ENCODE measurements at regions of chr18 and their contacts with region 1.

Region 1: DNA sequence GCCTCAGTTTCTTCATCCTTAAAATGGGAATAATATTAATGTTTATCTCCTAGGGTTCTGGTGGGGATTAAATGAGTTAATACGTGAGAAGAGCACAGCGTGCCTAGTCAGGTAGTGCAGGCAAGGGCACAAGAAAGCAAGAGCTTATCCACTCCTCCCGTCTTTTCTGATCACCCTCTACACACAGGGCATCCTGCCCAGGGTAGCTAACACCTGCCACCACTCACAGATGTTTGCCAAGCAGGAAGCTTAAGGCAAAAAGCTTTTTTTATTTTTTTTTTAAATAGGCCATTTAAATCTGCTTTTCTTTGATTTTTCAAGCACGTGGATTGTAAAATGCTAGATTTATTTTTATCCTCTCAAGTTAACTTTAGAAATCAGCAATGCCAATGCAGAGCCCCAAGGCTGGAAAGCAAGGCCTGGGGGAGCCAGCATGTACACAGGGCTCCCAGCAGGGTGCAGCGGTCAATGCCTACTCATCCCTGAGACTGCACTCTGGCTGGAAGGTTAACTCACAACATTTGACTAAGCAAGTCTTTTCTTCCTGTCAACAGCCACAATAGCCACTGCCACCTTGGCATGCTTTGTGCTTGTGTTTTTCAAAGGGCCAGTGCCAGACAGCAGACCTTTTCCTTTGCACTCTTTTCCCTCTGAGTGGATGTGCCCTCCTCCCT is 86.5 kb upstream of the ACAA2 start:
- DNase-seq: no peak
- H3K4me3 ChIP-seq: no peak overlapping the region
- H3K27ac ChIP-seq: no peak overlapping the region
- H3K4me1 ChIP-seq: no peaks in the 10 kb centered on the region
- H3K27me3 ChIP-seq: no peaks in the 10 kb centered on the region
- CTCF ChIP-seq: 0 out of 2 replicates have a peak, but pooled peaks have one; percentile 31

Region 2: GRCh38 chr18:49967171-49967570 is 67.4 kb after region 1 on chr18:
- CTCF ChIA-PET with region 1: no interaction called
- POLR2A ChIA-PET with region 1: no interaction called
- intact Hi-C with region 1: loop called (anchors 10 kb)
- DNase-seq: no peak
- H3K4me3 ChIP-seq: no peak overlapping the region
- H3K27ac ChIP-seq: no peak overlapping the region
- H3K4me1 ChIP-seq: no peaks in the 10 kb centered on the region
- H3K27me3 ChIP-seq: no peaks in the 10 kb centered on the region
- CTCF ChIP-seq: no peak

Region 3: DNA sequence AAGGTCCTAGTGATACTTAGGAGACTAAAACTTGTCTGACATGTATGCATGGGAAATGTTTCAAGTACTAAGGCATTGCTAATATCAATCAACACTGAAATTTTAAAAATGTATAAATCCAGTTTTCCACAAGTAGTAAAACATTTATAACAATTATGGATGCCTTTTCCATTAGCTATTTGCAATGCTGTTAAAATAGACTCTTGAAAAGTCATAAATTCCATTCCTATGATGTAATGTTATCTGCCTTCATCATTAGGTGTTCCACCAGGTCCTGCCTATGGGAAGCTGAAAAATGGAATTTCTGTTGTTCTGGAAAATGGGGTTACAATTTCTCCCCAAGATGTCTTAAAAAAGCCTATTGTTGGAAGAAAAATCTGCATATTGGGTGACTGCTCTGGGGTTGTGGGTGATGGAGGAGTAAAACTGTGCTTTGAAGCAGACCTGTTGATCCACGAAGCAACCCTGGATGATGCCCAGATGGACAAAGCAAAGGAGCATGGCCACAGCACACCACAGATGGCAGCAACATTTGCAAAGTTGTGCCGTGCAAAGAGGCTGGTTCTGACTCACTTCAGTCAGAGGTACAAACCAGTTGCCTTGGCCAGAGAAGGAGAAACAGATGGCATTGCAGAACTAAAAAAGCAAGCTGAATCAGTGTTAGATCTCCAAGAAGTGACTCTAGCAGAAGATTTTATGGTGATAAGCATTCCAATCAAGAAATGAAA is 1086.7 kb after region 1 on chr18:
- CTCF ChIA-PET with region 1: no interaction called
- POLR2A ChIA-PET with region 1: no interaction called
- intact Hi-C with region 1: no loop called
- DNase-seq: peak in 1 of 2 experiments; percentile 50
- H3K4me3 ChIP-seq: no peak overlapping the region
- H3K27ac ChIP-seq: no peak overlapping the region
- H3K4me1 ChIP-seq: peaks cover 6% of the 10 kb centered on the region; the same call in 1 of the 2 replicates
- H3K27me3 ChIP-seq: no peaks in the 10 kb centered on the region
- CTCF ChIP-seq: no peak